MCF 10A (cell line): ENCODE measurements at regions of chr21 and their contacts with region 1.

Region 1: DNA sequence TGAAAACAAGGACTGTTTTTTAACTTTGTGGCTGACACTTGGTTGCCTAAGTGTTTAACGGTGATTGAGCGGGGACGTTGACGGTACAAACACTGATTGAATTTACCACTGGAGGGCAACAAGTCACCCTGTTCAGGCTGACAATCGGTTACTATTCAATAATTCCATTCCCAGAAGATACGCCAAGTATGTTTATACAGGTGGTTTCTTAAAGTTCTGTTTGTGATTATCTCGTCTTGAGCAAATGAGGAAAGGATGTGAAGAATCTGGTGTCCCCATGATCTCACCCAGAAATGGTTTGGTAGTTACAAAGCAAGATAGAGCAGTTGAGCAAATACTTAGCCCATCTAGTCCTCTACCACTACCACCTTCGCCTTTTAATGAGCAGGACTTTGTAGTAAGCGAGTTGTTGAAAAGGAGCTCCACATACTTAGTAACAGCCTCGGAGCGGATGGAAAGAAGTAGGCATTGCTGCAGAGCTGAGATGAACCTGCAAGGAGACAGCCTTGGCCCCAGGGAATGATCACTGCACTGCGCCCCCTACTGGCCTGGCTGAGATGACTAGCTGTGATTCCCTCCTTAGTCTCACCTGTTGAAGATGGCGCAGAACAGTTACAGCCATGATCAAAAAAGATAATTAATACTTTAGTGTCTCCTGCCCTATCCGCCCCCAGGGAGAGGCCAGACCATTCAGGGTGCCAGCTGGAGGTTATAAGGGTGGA is 36.3 kb downstream of the IFNAR1 start:
- DNase-seq: peak; percentile 81
- H3K4me3 Mint-ChIP-seq: peak overlapping the region; percentile 53
- H3K27ac Mint-ChIP-seq: peak overlapping the region; percentile 16
- H3K4me1 Mint-ChIP-seq: peaks cover 14% of the 10 kb centered on the region
- H3K27me3 Mint-ChIP-seq: no peaks in the 10 kb centered on the region
- CTCF ChIP-seq: peak; percentile 86

Region 2: DNA sequence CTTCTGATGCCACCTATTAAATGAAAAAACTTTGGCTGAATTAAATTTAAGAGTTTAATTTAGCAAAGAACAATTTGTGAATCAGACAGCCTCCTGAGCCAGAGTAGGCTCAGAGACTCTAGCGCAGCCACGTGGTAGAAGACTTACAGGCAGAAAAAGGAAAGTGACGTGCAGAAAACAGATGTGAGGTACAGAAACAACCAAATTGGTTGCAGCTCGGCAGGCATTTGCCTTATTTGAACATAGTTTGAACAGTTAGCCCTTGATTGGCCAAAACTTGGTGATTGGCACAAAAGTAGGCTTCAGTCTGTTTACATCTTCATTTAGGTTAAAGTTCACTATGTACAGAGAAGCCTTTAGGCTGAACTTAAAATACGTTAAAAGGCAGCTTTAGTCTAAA is 798.6 kb before region 1 on chr21:
- CTCF ChIA-PET with region 1: no interaction called
- POLR2A ChIA-PET with region 1: no interaction called
- intact Hi-C with region 1: no loop called
- DNase-seq: no peak
- H3K4me3 Mint-ChIP-seq: no peak overlapping the region
- H3K27ac Mint-ChIP-seq: no peak overlapping the region
- H3K4me1 Mint-ChIP-seq: no peaks in the 10 kb centered on the region
- H3K27me3 Mint-ChIP-seq: no peaks in the 10 kb centered on the region
- CTCF ChIP-seq: peak; percentile 18

Region 3: GRCh38 chr21:33109574-33110339 is 251.3 kb before region 1 on chr21:
- CTCF ChIA-PET with region 1: no interaction called
- POLR2A ChIA-PET with region 1: no interaction called
- intact Hi-C with region 1: no loop called
- DNase-seq: no peak
- H3K4me3 Mint-ChIP-seq: no peak overlapping the region
- H3K27ac Mint-ChIP-seq: no peak overlapping the region
- H3K4me1 Mint-ChIP-seq: no peaks in the 10 kb centered on the region
- H3K27me3 Mint-ChIP-seq: peaks cover 97% of the 10 kb centered on the region
- CTCF ChIP-seq: no peak

Region 4: GRCh38 chr21:33339918-33340317 is 21.1 kb before region 1 on chr21:
- CTCF ChIA-PET with region 1: interaction called, 20 read pairs
- POLR2A ChIA-PET with region 1: interaction called, 4 read pairs
- intact Hi-C with region 1: no loop called
- DNase-seq: no peak
- H3K4me3 Mint-ChIP-seq: no peak overlapping the region
- H3K27ac Mint-ChIP-seq: peak overlapping the region; percentile 70
- H3K4me1 Mint-ChIP-seq: no peaks in the 10 kb centered on the region
- H3K27me3 Mint-ChIP-seq: no peaks in the 10 kb centered on the region
- CTCF ChIP-seq: no peak

Region 5: DNA sequence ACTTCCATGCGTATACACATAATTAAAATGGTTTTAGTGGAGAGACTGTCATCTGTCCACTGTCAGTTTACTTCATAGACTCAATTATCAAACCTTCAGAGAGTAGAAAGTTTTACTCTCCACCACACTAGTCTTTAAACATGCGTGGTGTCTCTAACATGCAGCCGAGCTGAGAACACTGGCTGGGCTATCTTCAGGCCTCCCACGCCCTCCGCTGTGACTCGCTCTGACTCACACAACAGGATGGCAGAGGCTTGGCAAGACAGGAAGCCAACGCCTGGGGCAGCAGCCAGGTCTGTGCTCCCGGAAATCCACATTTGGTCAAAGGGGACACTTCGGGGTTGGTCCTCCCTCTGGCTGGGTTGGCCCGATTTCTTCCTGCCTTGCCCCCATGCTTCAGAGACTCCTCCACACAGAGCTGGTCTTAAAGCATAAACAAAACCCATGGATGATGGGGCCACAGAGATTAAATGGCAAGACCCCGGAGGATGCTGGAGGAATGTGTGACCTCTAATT is 19.5 kb after region 1 on chr21:
- CTCF ChIA-PET with region 1: interaction called, 15 read pairs
- POLR2A ChIA-PET with region 1: interaction called, 31 read pairs
- intact Hi-C with region 1: no loop called
- DNase-seq: peak; percentile 99
- H3K4me3 Mint-ChIP-seq: peak overlapping the region; percentile 38
- H3K27ac Mint-ChIP-seq: peak overlapping the region; percentile 88
- H3K4me1 Mint-ChIP-seq: peaks cover 42% of the 10 kb centered on the region
- H3K27me3 Mint-ChIP-seq: no peaks in the 10 kb centered on the region
- CTCF ChIP-seq: no peak

Region 6: DNA sequence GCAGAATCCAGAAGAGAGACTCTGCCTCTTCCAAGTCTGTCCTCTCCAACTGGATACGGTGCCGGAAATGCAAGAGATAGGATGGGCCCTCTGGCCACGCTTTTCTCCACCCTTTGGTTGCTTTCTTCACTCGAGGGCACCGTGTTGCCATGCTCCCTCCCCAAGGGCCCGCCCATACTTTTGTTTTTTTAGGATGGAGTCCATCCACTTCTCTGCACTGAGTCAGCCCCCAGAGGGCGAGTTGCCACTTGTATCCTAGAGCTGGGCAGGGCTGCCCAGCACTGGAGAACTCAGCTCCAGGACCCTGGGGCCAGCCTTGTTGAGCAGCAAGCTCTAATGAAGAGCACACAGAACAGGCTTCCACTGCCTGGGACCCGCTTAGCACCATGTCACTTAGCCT is 67.6 kb after region 1 on chr21:
- CTCF ChIA-PET with region 1: interaction called, 19 read pairs
- POLR2A ChIA-PET with region 1: interaction called, 26 read pairs
- intact Hi-C with region 1: loop called (anchors 2 kb)
- DNase-seq: peak; percentile 99
- H3K4me3 Mint-ChIP-seq: peak overlapping the region; percentile 60
- H3K27ac Mint-ChIP-seq: peak overlapping the region; percentile 93
- H3K4me1 Mint-ChIP-seq: peaks cover 17% of the 10 kb centered on the region
- H3K27me3 Mint-ChIP-seq: no peaks in the 10 kb centered on the region
- CTCF ChIP-seq: no peak

Region 7: DNA sequence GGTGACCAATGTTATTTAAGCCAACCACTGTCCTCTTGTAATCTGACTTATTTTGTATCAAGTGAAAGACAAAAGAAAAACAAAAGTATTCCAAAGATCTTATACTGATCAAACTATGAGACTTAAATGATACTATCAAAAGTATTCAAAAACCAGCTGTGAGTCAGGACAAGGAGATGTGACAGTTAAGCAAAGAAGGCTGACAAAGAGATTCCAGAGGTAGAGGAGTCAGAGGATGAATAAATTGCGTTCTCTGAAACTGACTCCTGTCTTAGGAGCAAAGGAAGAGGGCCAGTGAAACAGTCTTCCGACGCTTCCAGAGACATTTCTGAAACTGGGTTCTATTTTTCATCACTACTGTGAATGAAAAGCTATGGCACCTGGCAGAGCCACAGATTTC is 97.8 kb after region 1 on chr21:
- CTCF ChIA-PET with region 1: interaction called, 11 read pairs
- POLR2A ChIA-PET with region 1: no interaction called
- intact Hi-C with region 1: no loop called
- DNase-seq: no peak
- H3K4me3 Mint-ChIP-seq: no peak overlapping the region
- H3K27ac Mint-ChIP-seq: no peak overlapping the region
- H3K4me1 Mint-ChIP-seq: no peaks in the 10 kb centered on the region
- H3K27me3 Mint-ChIP-seq: no peaks in the 10 kb centered on the region
- CTCF ChIP-seq: no peak

Region 8: DNA sequence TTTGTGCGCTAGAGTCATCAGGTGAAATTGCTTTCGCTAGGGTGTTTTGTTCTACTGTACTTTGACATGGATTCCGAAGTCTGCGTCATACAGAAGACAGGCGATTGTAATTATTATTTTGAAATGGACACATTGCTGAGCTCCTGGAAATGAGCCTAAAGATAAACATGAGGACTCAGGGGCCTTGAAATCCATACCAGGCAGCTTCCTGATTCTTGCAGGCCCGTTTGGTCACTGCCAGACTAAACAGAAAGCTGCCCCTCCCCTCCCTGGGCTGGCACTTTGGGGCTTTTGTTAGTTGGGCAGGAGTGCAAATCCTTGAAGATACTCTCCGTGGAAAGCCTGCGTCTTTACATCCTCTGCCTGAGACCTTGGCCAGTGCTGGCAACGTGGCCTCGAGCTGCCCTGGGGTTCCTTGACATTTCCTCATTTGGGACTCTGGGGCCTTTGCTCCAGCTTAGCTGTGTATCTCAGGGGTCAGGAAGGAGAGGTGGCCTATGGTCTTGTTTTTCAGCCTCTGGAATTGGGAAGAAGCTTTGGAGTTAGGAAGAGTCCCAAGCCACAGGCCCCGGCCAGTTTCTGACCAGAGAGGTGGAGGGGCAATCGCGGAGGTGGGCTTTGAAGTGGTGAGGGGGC is 975.8 kb after region 1 on chr21:
- CTCF ChIA-PET with region 1: no interaction called
- POLR2A ChIA-PET with region 1: no interaction called
- intact Hi-C with region 1: no loop called
- DNase-seq: no peak
- H3K4me3 Mint-ChIP-seq: no peak overlapping the region
- H3K27ac Mint-ChIP-seq: no peak overlapping the region
- H3K4me1 Mint-ChIP-seq: no peaks in the 10 kb centered on the region
- H3K27me3 Mint-ChIP-seq: no peaks in the 10 kb centered on the region
- CTCF ChIP-seq: no peak